ENCODE measurements at regions of chr2 and their contacts with region 1.

Region 1: GRCh38 chr2:174682578-174683391 is 81.5 kb downstream of the CHRNA1 start:
- DNase-seq: peak; percentile 80 to 92 (median 92)
- ATAC-seq: peak; percentile 91 to 92
- H3K4me3 ChIP-seq: peak overlapping the region; percentile 99
- H3K27ac ChIP-seq: peak overlapping the region; percentile 70
- H3K4me1 ChIP-seq: peaks cover 4% of the 10 kb centered on the region
- H3K27me3 ChIP-seq: no peaks in the 10 kb centered on the region

Region 2: GRCh38 chr2:174487108-174487819 is 195.5 kb before region 1 on chr2:
- intact Hi-C with region 1: loop called in 1 of 4 experiments (anchors 10 kb)
- DNase-seq: peak; percentile 100
- ATAC-seq: peak; percentile 100
- H3K4me3 ChIP-seq: peak overlapping the region; percentile 93
- H3K27ac ChIP-seq: peak overlapping the region; percentile 97
- H3K4me1 ChIP-seq: no peaks in the 10 kb centered on the region
- H3K27me3 ChIP-seq: no peaks in the 10 kb centered on the region

Region 3: GRCh38 chr2:174603280-174603679 is 79.5 kb before region 1 on chr2:
- intact Hi-C with region 1: loop called in 1 of 4 experiments (anchors 10 kb)
- DNase-seq: peak; percentile 47 to 80 (median 60)
- ATAC-seq: peak; percentile 89 to 90
- H3K4me3 ChIP-seq: no peak overlapping the region
- H3K27ac ChIP-seq: no peak overlapping the region
- H3K4me1 ChIP-seq: peaks cover 2% of the 10 kb centered on the region
- H3K27me3 ChIP-seq: no peaks in the 10 kb centered on the region